ENCODE measurements at regions of chr12 and their contacts with region 1.

Region 1: GRCh38 chr12:118372541-118373495 is at the start of gene TAOK3:
- DNase-seq: peak; percentile 98
- ATAC-seq: peak; percentile 88
- H3K4me3 Mint-ChIP-seq: peak within 1 kb of the TSS; percentile 88
- H3K27ac Mint-ChIP-seq: peak within 1 kb of the TSS; percentile 90
- H3K4me1 Mint-ChIP-seq: peaks cover 40% of the 10 kb centered on the region
- H3K27me3 Mint-ChIP-seq: peaks cover 3% of the 10 kb centered on the region
- total RNA-seq, gene TAOK3: 60.5 to 64.9 TPM

Region 2: DNA sequence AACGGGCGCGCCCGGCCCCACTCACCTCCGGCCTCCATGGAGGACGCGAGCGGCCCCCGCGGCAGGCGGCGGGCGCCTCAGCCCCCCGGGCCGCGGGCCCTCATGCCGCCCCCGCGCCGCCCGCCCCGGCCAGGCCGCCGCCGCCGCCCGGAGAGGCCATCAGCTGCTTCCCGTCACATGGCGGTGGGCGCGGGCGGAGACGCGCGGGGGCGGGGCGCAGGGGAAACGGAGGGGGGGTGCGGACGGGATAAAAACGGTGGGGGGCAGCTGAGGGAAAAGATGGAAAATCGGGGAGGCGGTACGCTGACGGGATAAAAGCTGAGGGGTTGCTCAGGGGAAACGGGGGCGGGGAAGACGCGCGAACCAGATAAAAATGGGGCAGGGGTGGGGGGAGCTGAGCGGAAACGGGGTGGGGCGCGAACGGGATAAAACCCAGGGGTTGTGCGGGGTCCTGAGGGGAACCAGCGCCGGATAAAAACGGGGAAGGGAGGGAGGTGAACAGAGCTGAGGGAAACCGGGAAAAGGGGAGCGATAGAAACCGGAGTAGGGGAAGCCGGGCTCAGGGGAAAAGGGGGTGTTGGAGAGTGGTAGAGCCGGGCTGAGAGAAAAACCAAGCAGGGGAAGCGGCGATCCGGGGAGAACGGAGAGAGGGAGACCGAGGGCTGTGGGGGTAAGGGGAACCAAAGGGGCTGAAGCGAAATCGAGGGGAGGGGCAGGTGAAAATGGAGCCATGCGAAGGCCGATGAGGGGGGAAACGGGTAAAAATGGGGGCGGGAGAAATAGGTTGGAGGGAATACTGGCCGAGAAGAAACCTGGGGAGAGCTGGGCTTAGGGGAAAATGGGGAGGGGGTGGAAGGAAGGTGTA is 311.6 kb before region 1 on chr12 and contains the start of gene WSB2:
- CTCF ChIA-PET with region 1: interaction called, 20 read pairs
- DNase-seq: peak; percentile 67
- ATAC-seq: peak; percentile 50
- H3K4me3 Mint-ChIP-seq: peak within 1 kb of the TSS; percentile 84
- H3K27ac Mint-ChIP-seq: peak within 1 kb of the TSS; percentile 93
- H3K4me1 Mint-ChIP-seq: peaks cover 53% of the 10 kb centered on the region
- H3K27me3 Mint-ChIP-seq: peaks cover 4% of the 10 kb centered on the region
- total RNA-seq, gene WSB2: 44.1 to 52.1 TPM

Region 3: GRCh38 chr12:118135788-118136558 is 236.8 kb before region 1 on chr12 and contains the start of gene PEBP1:
- CTCF ChIA-PET with region 1: interaction called, 51 read pairs
- DNase-seq: peak; percentile 95
- ATAC-seq: peak; percentile 100
- H3K4me3 Mint-ChIP-seq: peak within 1 kb of the TSS; percentile 87
- H3K27ac Mint-ChIP-seq: peak within 1 kb of the TSS; percentile 86
- H3K4me1 Mint-ChIP-seq: peaks cover 36% of the 10 kb centered on the region
- H3K27me3 Mint-ChIP-seq: no peaks in the 10 kb centered on the region
- total RNA-seq, gene PEBP1: 93.7 to 136 TPM

Region 4: DNA sequence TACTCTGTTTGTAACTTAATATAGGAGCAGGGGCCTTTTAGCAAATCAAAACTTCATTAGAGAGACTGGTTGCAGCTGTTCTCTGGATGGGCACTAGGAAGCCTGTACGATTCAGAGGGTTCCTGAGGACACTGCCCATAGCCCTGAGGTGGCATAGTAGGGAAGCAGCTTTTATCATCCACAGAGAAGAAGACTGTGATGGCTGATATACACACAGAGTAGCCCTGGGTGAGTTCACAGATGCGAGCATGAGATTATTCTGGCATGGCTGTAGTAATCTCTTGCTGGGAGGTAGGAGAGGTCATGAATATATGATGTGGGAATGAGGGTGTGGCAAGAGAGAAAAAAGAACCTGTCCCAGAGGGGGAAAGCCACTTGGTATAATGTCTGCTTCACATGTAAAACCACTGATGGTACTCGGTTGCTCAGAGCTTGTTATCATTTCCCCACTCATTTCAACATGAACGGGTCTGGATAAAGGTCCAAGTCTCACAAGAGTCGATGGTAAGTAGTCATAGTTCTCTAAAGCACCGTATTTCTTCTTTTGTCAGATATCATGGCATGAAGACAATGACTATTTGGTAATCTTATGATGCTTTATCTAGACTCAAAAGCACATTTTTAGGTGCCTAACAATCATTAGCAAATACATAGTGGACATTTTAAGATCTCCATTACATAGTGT is 184.9 kb before region 1 on chr12:
- CTCF ChIA-PET with region 1: interaction called, 89 read pairs
- DNase-seq: no peak
- ATAC-seq: no peak
- H3K4me3 Mint-ChIP-seq: no peak overlapping the region
- H3K27ac Mint-ChIP-seq: no peak overlapping the region
- H3K4me1 Mint-ChIP-seq: peaks cover 2% of the 10 kb centered on the region
- H3K27me3 Mint-ChIP-seq: no peaks in the 10 kb centered on the region

Region 5: DNA sequence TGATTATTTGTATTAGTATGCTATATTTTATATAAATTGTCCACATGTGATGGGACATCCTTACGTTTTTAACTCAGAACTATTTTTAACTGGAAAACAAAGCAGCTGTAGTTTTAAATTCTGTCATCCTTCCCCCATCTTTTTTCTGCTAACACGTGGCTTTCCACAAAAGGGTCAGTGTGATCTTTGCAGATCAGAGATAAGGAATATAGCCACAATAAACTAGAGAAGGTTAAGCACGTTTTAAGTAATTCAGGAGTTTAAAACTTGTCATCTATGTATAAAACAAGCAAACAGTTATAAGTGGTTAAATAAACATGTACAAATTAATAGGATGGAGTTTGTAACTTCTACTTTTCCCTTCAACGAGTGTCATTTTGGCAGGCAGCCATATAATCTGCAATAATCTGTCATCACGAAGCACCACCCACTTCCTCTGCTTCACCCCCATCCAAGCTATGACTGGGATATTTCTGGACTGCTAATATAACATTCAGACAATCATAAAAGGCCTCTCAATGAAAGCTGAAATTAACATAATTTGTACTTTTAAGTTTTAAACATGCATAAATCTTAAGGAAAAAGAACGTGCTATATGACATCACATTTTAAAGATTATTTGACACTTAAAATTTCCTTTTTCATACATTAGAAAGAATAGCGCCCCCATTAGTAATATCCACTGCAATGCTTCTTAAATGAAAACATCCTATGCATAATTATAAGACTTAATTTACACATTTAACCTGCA is 15.4 kb before region 1 on chr12:
- CTCF ChIA-PET with region 1: interaction called, 97 read pairs
- DNase-seq: peak; percentile 76
- ATAC-seq: peak; percentile 82
- H3K4me3 Mint-ChIP-seq: peak overlapping the region; percentile 89
- H3K27ac Mint-ChIP-seq: peak overlapping the region; percentile 93
- H3K4me1 Mint-ChIP-seq: peaks cover 42% of the 10 kb centered on the region
- H3K27me3 Mint-ChIP-seq: no peaks in the 10 kb centered on the region

Measured in activated CD8-positive, alpha-beta memory T cell treated with anti-CD3 and anti-CD28 coated beads, Interleukin-2, amount 10 ng/mL, durations not matched to agents 7 days and 5 days (primary cell).